B cell (primary cell): ENCODE measurements at regions of chr1 and their contacts with region 1.

Region 1: DNA sequence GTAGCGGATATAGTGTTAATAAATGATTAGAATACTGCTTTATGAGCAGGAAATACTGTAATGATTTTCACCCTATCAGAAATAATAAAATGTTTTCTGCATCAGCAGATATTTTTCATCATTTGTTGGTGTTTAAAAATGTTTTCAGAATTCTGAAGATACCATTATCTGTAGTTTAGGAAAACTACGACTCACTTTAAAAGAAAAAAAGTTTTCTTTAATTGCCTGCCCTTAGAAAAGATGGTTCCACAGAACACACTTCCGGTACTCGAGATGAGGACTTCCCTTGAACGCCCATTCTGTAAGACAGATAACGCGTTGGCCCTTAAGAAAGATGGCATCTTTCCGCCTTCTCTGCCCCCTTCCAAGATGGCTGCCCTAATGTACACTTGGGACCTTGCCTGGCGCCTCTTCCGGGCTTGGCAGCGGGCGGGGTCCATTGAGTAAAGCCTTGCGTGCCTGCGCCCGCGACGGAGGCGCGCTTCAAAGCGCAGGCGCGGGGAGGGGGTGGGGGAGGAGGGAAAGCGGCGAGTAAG is at the start of gene SZRD1:
- DNase-seq: peak; percentile 99
- ATAC-seq: peak; percentile 83
- H3K4me3 ChIP-seq: peak within 1 kb of the TSS; percentile 89 to 98 (median 91)
- H3K4me3 Mint-ChIP-seq: peak within 1 kb of the TSS; percentile 99
- H3K27ac ChIP-seq: peak within 1 kb of the TSS; percentile 98 to 99
- H3K27ac Mint-ChIP-seq: peak within 1 kb of the TSS; percentile 100
- H3K4me1 ChIP-seq: peaks cover 18 to 29% of the 10 kb centered on the region in 2 donors
- H3K4me1 Mint-ChIP-seq: peaks cover 36% of the 10 kb centered on the region
- H3K27me3 ChIP-seq: no peaks in the 10 kb centered on the region
- H3K27me3 Mint-ChIP-seq: no peaks in the 10 kb centered on the region
- CTCF ChIP-seq: no peak
- total RNA-seq, gene SZRD1: 109 and 110 TPM in 2 replicates

Region 2: DNA sequence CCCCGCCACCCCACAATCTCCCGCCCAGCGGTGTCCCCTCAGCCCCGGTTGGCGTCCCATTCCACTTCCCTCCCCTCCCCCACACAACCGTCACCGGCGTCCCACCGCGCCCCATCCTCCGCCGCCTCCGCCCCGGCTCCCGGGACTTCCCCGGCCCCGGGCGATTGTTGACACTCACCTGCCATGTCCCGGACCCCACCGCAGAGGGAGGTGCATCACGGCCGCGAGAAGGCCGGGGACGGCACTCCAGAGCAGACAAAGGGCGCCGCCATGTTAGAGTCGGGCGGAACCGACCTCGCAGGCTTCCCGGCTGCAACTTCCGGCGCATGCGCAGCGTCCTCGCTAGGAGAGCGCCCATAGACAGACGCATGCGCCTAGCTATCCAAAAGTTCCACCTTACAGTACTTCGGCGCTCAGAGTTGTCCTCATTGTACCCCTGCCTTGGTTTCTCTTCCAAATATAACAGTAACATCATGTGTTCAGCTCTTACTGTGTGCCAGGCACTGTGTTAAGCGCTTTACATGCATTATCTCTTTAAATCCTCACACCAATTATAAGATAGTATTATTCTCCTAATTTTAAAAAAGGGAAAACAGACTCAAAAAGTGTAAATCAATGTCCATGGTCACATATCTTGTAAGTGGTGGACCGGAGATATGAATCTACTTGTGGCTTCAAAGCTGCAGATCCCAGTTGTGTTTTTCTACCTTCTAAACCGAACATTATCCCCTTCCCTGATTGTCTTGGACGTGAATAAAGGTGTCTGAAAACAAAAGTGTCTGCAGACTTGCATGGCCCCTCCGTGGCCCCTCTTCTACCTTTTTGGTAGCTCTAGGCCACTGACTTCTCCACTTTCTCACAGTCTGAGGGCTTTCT is 390.7 kb before region 1 on chr1 and contains the start of gene ZBTB17:
- CTCF ChIA-PET with region 1: no interaction called
- POLR2A ChIA-PET with region 1: no interaction called
- intact Hi-C with region 1: loop called (anchors 10 kb)
- DNase-seq: peak; percentile 97
- ATAC-seq: peak; percentile 81
- H3K4me3 ChIP-seq: peak within 1 kb of the TSS; percentile 58 to 94 (median 88)
- H3K4me3 Mint-ChIP-seq: peak within 1 kb of the TSS; percentile 93
- H3K27ac ChIP-seq: peak within 1 kb of the TSS; percentile 70 to 86
- H3K27ac Mint-ChIP-seq: peak within 1 kb of the TSS; percentile 92
- H3K4me1 ChIP-seq: peaks cover 20 to 33% of the 10 kb centered on the region in 2 donors
- H3K4me1 Mint-ChIP-seq: peaks cover 35% of the 10 kb centered on the region
- H3K27me3 ChIP-seq: no peaks in the 10 kb centered on the region
- H3K27me3 Mint-ChIP-seq: no peaks in the 10 kb centered on the region
- CTCF ChIP-seq: no peak
- total RNA-seq, gene ZBTB17: 94.1 and 101 TPM in 2 replicates

Region 3: GRCh38 chr1:16206547-16207317 is 160.1 kb before region 1 on chr1:
- CTCF ChIA-PET with region 1: interaction called, 5 read pairs
- POLR2A ChIA-PET with region 1: interaction called, 5 read pairs
- intact Hi-C with region 1: loop called (anchors 2 kb)
- DNase-seq: peak; percentile 93
- ATAC-seq: peak; percentile 87
- H3K4me3 ChIP-seq: peak overlapping the region; percentile 11 to 96 (median 72)
- H3K4me3 Mint-ChIP-seq: peak overlapping the region; percentile 97
- H3K27ac ChIP-seq: peak overlapping the region; percentile 61 to 79
- H3K27ac Mint-ChIP-seq: peak overlapping the region; percentile 93
- H3K4me1 ChIP-seq: peaks cover 12 to 17% of the 10 kb centered on the region in 2 donors
- H3K4me1 Mint-ChIP-seq: peaks cover 10% of the 10 kb centered on the region
- H3K27me3 ChIP-seq: no peaks in the 10 kb centered on the region
- H3K27me3 Mint-ChIP-seq: peaks cover under 1% of the 10 kb centered on the region
- CTCF ChIP-seq: no peak

Region 4: DNA sequence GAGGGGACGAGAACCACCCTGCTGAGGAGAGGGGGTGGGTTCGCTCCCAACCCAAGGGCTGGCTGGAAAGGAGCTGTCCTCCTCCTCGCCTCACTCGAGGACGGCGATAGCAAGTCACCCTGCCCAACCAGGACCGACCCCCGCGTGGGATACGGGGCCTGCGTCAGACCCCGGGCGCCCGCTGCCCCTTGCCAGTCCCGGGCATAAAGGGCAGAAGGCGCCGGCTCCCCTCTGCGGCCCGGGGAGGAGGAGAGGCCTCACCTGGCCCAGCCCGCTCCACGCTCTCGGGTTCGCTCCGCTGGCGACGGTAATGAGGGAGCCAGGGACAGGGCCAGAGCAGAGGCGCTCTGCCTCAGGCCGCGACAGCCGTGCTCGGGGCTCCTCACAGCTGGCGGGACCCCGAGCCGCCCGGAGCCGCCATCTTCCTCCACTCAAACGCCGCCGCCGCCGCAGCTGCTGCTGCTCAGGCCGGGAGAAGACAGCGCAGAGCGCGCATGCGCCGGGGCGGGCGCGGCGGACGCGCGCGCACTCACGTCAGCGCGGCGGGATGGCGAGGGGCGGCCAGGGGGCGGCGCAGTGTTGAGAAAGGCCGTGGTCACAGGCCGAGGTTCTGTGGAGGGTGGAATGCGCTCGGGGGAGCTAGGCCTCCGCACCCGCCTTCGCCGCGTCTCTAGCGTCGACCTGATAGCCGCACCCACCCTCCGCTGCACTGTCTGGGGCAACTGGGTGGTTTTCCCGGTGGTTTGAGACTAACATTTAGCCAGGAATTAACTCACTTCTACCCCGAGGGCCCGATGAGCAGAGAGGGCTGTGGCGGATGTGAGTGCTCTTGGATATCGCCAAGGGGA is 14.6 kb before region 1 on chr1 and contains the start of gene FBXO42:
- CTCF ChIA-PET with region 1: interaction called, 52 read pairs
- POLR2A ChIA-PET with region 1: interaction called, 6 read pairs
- intact Hi-C with region 1: loop called (anchors 1 kb)
- DNase-seq: peak; percentile 96
- ATAC-seq: peak; percentile 93
- H3K4me3 ChIP-seq: peak within 1 kb of the TSS; percentile 66 to 99 (median 81)
- H3K4me3 Mint-ChIP-seq: peak within 1 kb of the TSS; percentile 84
- H3K27ac ChIP-seq: peak within 1 kb of the TSS; percentile 87 to 90
- H3K27ac Mint-ChIP-seq: peak within 1 kb of the TSS; percentile 92
- H3K4me1 ChIP-seq: peaks cover 19 to 30% of the 10 kb centered on the region in 2 donors
- H3K4me1 Mint-ChIP-seq: peaks cover 23% of the 10 kb centered on the region
- H3K27me3 ChIP-seq: no peaks in the 10 kb centered on the region
- H3K27me3 Mint-ChIP-seq: no peaks in the 10 kb centered on the region
- CTCF ChIP-seq: peak; percentile 54
- total RNA-seq, gene FBXO42: 25.4 and 33.1 TPM in 2 replicates

Region 5: DNA sequence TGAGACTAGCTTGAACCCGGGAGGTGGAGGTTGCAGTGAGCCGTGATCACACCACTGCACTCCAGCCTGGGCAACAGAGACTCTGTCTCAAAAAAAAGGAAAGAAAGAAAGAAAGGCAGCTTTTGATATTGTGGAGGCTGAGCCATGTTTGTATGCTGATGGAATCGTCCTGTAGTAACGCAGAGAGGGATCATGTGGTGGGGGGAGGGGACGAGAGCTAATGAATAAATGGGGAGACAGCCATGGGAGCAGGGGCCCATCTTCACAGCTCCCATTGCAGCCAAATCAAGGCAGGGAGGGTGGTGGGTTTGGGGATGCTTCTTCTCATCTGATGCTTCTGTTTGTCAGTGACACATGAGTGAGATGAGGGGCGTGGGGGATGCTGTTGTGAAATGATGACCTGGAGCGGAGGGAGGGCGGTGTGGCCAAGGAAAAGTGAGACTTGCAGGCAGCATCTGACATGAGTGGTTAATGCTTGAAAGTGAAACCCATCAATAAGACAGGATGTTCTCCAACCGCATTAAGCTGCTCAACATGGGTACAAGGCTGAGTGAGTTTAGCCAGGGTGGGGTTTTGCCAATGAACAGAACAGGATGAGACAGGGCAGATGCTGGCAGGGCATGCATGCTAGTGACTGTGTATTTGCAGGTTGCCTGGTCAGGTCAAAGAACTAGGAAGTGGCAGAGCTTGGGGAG is 53.8 kb after region 1 on chr1:
- CTCF ChIA-PET with region 1: interaction called, 4 read pairs
- POLR2A ChIA-PET with region 1: interaction called, 5 read pairs
- intact Hi-C with region 1: loop called (anchors 1 kb)
- DNase-seq: peak; percentile 78
- ATAC-seq: peak; percentile 92
- H3K4me3 ChIP-seq: peak overlapping the region in 2 of 5 experiments; percentile 9 to 44
- H3K4me3 Mint-ChIP-seq: peak overlapping the region; percentile 57
- H3K27ac ChIP-seq: peak overlapping the region; percentile 25 to 74
- H3K27ac Mint-ChIP-seq: peak overlapping the region; percentile 91
- H3K4me1 ChIP-seq: peaks cover 19 to 26% of the 10 kb centered on the region in 2 donors
- H3K4me1 Mint-ChIP-seq: peaks cover 26% of the 10 kb centered on the region
- H3K27me3 ChIP-seq: no peaks in the 10 kb centered on the region
- H3K27me3 Mint-ChIP-seq: no peaks in the 10 kb centered on the region
- CTCF ChIP-seq: no peak

Region 6: GRCh38 chr1:16498573-16499413 is 132.0 kb after region 1 on chr1:
- CTCF ChIA-PET with region 1: no interaction called
- POLR2A ChIA-PET with region 1: no interaction called
- intact Hi-C with region 1: loop called (anchors 1 kb)
- DNase-seq: peak; percentile 92
- ATAC-seq: peak; percentile 96
- H3K4me3 ChIP-seq: peak overlapping the region; percentile 41 to 93 (median 77)
- H3K4me3 Mint-ChIP-seq: peak overlapping the region; percentile 89
- H3K27ac ChIP-seq: peak overlapping the region in 1 of 2 donors; percentile 26
- H3K27ac Mint-ChIP-seq: peak overlapping the region; percentile 71
- H3K4me1 ChIP-seq: peaks cover 0 to 23% of the 10 kb centered on the region in 2 donors
- H3K4me1 Mint-ChIP-seq: peaks cover 30% of the 10 kb centered on the region
- H3K27me3 ChIP-seq: no peaks in the 10 kb centered on the region
- H3K27me3 Mint-ChIP-seq: no peaks in the 10 kb centered on the region
- CTCF ChIP-seq: no peak